H1 (cell line): ENCODE measurements at regions of chr18 and their contacts with region 1.

Region 1: GRCh38 chr18:24176727-24177416 is 38.0 kb downstream of the CABYR start:
- DNase-seq: peak; percentile 50 to 95
- H3K4me3 ChIP-seq: no peak overlapping the region
- H3K27ac ChIP-seq: no peak overlapping the region
- H3K4me1 ChIP-seq: peaks cover 0 to 6% (median 0%) of the 10 kb centered on the region in 4 experiments; a peak in 1 of 7 replicates
- H3K27me3 ChIP-seq: no peaks in the 10 kb centered on the region
- CTCF ChIP-seq: peak; percentile 73 to 83 (median 78)
- EP300 ChIP-seq: no peak
- POLR2A ChIP-seq: no peak
- RAD21 ChIP-seq: peak; percentile 75 to 84

Region 2: GRCh38 chr18:23918401-23919032 is 258.4 kb before region 1 on chr18:
- CTCF ChIA-PET with region 1: no interaction called
- POLR2A ChIA-PET with region 1: no interaction called
- DNase-seq: peak; percentile 46 to 90
- H3K4me3 ChIP-seq: no peak overlapping the region
- H3K27ac ChIP-seq: no peak overlapping the region
- H3K4me1 ChIP-seq: no peaks in the 10 kb centered on the region
- H3K27me3 ChIP-seq: no peaks in the 10 kb centered on the region
- CTCF ChIP-seq: peak; percentile 60 to 86 (median 75)
- EP300 ChIP-seq: no peak
- POLR2A ChIP-seq: no peak
- RAD21 ChIP-seq: peak; percentile 82 to 89

Region 3: DNA sequence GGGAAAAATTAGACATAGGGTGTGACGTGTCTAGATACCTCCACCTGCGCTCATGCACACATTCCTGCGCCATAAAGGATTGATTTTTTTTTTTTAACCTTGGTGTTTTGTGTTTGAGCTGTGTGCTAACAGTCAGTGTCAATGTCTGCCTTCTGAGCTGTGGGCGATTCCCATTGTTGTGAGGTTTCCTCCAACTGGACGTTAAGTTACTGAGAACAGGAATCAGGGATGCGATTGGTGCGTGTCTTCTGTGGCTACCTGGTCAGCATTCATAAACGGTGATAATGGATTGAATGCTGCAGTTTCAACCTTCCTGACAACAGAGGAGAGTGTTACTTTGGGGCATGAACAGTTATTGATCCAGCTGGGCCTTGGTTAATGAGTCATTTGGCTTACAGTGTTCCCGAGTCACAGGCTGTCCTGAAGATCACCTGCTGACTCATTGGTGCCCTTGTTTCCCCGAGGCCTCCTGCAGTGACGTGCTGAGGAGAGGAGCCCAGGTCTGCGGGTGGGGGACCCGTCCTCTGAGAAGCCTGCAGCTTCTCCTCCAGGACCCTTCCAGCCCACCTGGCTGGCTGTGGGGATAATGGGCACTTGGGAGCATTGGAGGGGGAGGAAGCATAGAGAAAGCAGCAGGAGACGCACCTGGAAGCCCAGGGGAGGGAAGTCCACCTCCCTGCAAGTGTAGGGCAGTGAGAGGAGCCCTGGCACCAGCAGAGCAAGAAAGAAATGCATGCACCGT is 63.8 kb before region 1 on chr18:
- CTCF ChIA-PET with region 1: no interaction called
- POLR2A ChIA-PET with region 1: no interaction called
- DNase-seq: no peak
- H3K4me3 ChIP-seq: no peak overlapping the region
- H3K27ac ChIP-seq: 0 out of 2 replicates have a peak overlapping the region, but pooled peaks have one; percentile 22
- H3K4me1 ChIP-seq: peaks cover 0 to 4% (median 2%) of the 10 kb centered on the region in 4 experiments; a peak in 2 of 7 replicates
- H3K27me3 ChIP-seq: no peaks in the 10 kb centered on the region
- CTCF ChIP-seq: no peak
- EP300 ChIP-seq: no peak
- POLR2A ChIP-seq: no peak
- RAD21 ChIP-seq: no peak

Region 4: DNA sequence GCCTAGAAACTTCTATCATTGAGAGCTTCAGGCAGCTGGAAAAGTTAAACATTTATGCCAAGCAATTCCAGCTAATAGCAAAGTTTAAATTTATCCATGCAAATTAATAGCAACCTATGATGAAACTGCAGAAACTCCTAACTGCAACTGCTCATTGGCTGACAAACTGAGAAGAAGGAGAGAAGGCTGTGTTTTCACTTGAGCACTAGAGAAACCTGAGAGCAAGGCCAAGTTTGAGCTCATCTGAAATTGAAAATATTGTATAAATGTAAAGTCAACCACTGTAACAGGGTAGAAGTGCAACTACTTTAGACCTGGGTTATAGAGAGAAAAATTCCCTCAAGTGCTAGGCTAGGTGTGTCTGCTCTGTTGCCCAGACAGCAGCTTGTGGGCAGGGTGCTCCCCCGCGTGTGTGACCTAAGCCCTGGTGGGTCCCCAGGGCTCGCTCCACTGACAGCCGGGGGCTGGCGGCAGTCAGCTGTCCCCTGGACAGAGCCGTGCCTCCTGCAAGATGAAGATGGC is 12.2 kb after region 1 on chr18:
- CTCF ChIA-PET with region 1: interaction called, 29 read pairs
- POLR2A ChIA-PET with region 1: no interaction called
- DNase-seq: no peak
- H3K4me3 ChIP-seq: no peak overlapping the region
- H3K27ac ChIP-seq: peak overlapping the region; percentile 24; the same call in 1 of the 2 replicates
- H3K4me1 ChIP-seq: 0 out of 7 replicates have a peak, but pooled peaks cover 0 to 2% (median under 1%) of the 10 kb centered on the region in 4 experiments
- H3K27me3 ChIP-seq: no peaks in the 10 kb centered on the region
- CTCF ChIP-seq: no peak
- EP300 ChIP-seq: no peak
- POLR2A ChIP-seq: no peak
- RAD21 ChIP-seq: no peak

Region 5: GRCh38 chr18:24234330-24234729 is 57.5 kb after region 1 on chr18:
- CTCF ChIA-PET with region 1: interaction called, 10 read pairs
- POLR2A ChIA-PET with region 1: no interaction called
- DNase-seq: no peak
- H3K4me3 ChIP-seq: peak overlapping the region in 2 of 4 experiments; percentile 3 to 32; a peak in 1 of 8 replicates
- H3K27ac ChIP-seq: no peak overlapping the region
- H3K4me1 ChIP-seq: peaks cover 4 to 22% (median 8%) of the 10 kb centered on the region in 4 experiments
- H3K27me3 ChIP-seq: no peaks in the 10 kb centered on the region
- CTCF ChIP-seq: no peak
- EP300 ChIP-seq: no peak
- POLR2A ChIP-seq: no peak
- RAD21 ChIP-seq: no peak

Region 6: GRCh38 chr18:24397694-24398365 is 221.0 kb after region 1 on chr18 and contains the start of gene OSBPL1A:
- CTCF ChIA-PET with region 1: no interaction called
- POLR2A ChIA-PET with region 1: no interaction called
- DNase-seq: peak; percentile 89 to 94
- H3K4me3 ChIP-seq: peak within 1 kb of the TSS; percentile 64 to 94 (median 92)
- H3K27ac ChIP-seq: peak within 1 kb of the TSS; percentile 88
- H3K4me1 ChIP-seq: peaks cover 4 to 9% (median 6%) of the 10 kb centered on the region in 4 experiments; a peak in 6 of 7 replicates
- H3K27me3 ChIP-seq: no peaks in the 10 kb centered on the region; a peak in 1 of 7 replicates
- CTCF ChIP-seq: no peak
- EP300 ChIP-seq: peak in 1 of 2 experiments; percentile 61; a peak in 1 of 3 replicates
- POLR2A ChIP-seq: peak; percentile 57 to 91
- RAD21 ChIP-seq: no peak
- total RNA-seq, gene OSBPL1A: 74.9 and 77.1 TPM in 2 replicates